Natural killer cell (primary cell): ENCODE measurements at regions of chr17 and their contacts with region 1.

Region 1: GRCh38 chr17:58417300-58418092 is at the start of gene RNF43:
- DNase-seq: peak; percentile 70 to 95
- ATAC-seq: peak; percentile 100
- H3K4me3 ChIP-seq: no peak within 1 kb of the TSS
- H3K4me3 Mint-ChIP-seq: no peak within 1 kb of the TSS
- H3K27ac ChIP-seq: peak within 1 kb of the TSS; percentile 3
- H3K27ac Mint-ChIP-seq: peak within 1 kb of the TSS; percentile 72 to 84
- H3K4me1 ChIP-seq: peaks cover 5% of the 10 kb centered on the region
- H3K4me1 Mint-ChIP-seq: peaks cover 13 to 15% of the 10 kb centered on the region in 2 donors
- H3K27me3 ChIP-seq: no peaks in the 10 kb centered on the region
- H3K27me3 Mint-ChIP-seq: no peaks in the 10 kb centered on the region
- CTCF ChIP-seq: peak; percentile 72
- total RNA-seq, gene RNF43: 0.95 to 1.1 (median 1.0) TPM

Region 2: DNA sequence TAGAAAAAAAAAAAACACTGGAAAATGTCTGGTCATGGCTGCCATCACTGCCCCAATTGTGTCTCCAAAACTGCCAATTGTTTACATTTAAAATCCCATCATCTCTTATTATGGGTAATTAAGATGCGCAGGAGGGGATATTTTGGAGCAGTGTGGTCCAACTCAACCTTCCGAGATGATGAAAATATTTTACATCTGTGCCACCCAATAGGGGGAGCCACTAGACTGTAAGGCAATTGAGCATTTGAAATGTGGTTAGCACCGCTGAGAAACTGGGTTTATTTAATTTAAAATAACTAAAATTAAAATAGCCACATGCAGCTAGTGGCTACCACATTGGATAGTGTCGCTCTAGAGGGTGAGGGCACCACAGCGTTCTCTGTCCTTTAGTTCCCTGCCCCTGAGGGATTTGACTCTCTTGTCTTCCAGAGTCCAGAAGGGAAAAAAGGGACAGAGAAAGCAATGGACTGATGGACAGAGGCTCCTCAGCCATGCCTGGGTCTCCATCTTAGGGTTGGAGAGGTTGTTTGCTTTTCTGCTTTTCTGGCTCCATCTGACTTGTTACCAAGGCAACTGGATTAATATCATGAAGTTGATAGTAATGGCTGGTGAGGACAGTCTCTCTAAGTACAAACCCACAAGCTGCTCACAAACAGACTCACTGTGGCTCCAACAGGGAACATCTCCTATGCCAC is 140.2 kb before region 1 on chr17:
- intact Hi-C with region 1: loop called (anchors 1 kb)
- DNase-seq: peak in 1 of 2 donors; percentile 53
- ATAC-seq: peak in 2 of 3 donors; percentile 34 to 48
- H3K4me3 ChIP-seq: no peak overlapping the region
- H3K4me3 Mint-ChIP-seq: no peak overlapping the region
- H3K27ac ChIP-seq: no peak overlapping the region
- H3K27ac Mint-ChIP-seq: no peak overlapping the region
- H3K4me1 ChIP-seq: peaks cover 12% of the 10 kb centered on the region
- H3K4me1 Mint-ChIP-seq: peaks cover 5 to 10% of the 10 kb centered on the region in 2 donors
- H3K27me3 ChIP-seq: no peaks in the 10 kb centered on the region
- H3K27me3 Mint-ChIP-seq: peaks cover 8 to 18% of the 10 kb centered on the region in 2 donors
- CTCF ChIP-seq: peak; percentile 46

Region 3: DNA sequence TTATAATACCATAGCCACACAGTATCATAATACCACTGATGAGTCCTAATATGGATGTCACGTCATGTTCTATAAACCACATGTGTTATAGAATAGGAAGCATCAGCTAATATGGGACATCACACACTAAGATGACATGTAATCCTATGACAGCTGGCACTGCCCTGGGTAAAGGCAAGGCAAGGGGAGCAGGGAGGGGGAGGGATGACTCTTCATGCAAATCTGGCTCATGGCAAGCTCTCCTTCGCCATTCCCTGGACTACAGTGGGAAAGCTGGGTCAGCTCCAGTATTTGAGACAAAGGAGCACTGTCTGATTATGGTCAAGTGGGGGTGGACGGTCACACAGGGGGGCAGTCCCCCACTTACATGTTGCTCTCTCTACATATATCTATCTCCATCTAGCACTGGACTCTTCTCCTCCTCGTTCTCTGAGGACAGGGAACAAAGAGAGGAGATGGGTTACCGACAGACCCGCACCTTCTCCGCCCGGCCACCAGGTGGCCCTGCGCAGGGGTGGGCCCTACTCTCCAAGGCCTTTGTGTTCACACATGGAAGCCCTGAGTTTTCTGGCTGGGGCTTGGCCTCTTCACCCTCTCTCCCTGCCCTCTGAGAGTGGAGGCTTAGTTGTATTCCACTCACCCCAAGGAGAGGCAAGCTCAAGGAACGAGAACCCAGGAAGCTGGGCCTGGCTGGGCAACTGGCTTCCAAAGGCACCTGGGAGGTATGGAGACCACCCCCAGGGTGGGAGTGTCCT is 113.3 kb before region 1 on chr17:
- intact Hi-C with region 1: loop called (anchors 1 kb)
- DNase-seq: peak; percentile 55 to 78
- ATAC-seq: peak; percentile 79 to 98 (median 85)
- H3K4me3 ChIP-seq: no peak overlapping the region
- H3K4me3 Mint-ChIP-seq: no peak overlapping the region
- H3K27ac ChIP-seq: no peak overlapping the region
- H3K27ac Mint-ChIP-seq: peak overlapping the region in 1 of 2 donors; percentile 38
- H3K4me1 ChIP-seq: peaks cover 22% of the 10 kb centered on the region
- H3K4me1 Mint-ChIP-seq: peaks cover 0 to 15% of the 10 kb centered on the region in 2 donors
- H3K27me3 ChIP-seq: no peaks in the 10 kb centered on the region
- H3K27me3 Mint-ChIP-seq: no peaks in the 10 kb centered on the region
- CTCF ChIP-seq: peak; percentile 76